Mammary epithelial cell (primary cell): ENCODE measurements at regions of chr3 and their contacts with region 1.

Region 1: DNA sequence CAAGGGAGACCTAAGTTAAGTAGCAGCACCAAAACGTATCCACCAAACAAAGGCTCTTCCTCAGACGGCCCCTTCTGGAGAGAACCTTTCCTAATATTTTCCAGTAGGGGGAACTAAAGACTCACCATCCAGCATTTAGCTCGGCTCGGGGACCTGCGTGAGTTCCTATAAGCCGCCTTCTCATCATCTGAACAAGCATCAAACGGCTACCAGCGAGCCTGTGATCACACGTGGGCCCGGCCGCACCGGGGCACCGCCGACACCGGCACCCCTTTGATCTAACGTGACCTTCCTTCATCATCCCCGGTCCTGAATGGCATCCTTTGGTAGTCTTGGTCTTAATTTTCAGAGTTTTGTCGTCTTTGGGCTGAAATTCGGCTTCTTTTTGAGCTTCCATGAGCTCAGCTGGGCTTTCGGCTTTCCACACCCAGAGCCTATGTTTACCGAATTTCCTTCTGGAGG is 1.4 kb upstream of the ROBO2 start:
- DNase-seq: peak; percentile 67
- H3K4me3 ChIP-seq: no peak overlapping the region
- H3K27ac ChIP-seq: no peak overlapping the region
- H3K4me1 ChIP-seq: peaks cover 7% of the 10 kb centered on the region
- H3K27me3 ChIP-seq: peaks cover 16% of the 10 kb centered on the region
- CTCF ChIP-seq: peak; percentile 45 to 72

Region 2: DNA sequence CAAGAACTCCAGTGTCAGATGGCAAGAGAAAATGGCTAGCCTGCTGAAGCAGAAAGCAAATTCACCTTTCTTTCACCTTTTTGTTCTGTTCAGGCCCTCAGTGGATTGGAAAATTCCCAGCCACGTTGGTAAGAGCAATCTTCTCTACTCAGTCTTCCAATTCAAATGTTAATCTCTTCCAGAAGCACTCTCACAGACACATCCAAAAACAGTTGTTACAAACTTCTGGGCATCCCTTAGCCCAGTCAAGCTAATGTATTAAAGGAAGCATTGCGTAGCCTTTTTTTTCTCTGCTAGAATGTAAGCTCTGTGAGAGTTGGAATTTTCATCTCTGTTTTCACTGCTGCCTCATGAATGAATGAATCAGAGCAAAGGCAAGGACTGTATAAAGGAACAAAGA is 107.8 kb before region 1 on chr3:
- CTCF ChIA-PET with region 1: no interaction called
- dilution Hi-C with region 1: no loop called
- in situ Hi-C with region 1: no loop called
- intact Hi-C with region 1: no loop called
- DNase-seq: no peak
- H3K4me3 ChIP-seq: no peak overlapping the region
- H3K27ac ChIP-seq: no peak overlapping the region
- H3K4me1 ChIP-seq: no peaks in the 10 kb centered on the region
- H3K27me3 ChIP-seq: no peaks in the 10 kb centered on the region
- CTCF ChIP-seq: no peak

Region 3: DNA sequence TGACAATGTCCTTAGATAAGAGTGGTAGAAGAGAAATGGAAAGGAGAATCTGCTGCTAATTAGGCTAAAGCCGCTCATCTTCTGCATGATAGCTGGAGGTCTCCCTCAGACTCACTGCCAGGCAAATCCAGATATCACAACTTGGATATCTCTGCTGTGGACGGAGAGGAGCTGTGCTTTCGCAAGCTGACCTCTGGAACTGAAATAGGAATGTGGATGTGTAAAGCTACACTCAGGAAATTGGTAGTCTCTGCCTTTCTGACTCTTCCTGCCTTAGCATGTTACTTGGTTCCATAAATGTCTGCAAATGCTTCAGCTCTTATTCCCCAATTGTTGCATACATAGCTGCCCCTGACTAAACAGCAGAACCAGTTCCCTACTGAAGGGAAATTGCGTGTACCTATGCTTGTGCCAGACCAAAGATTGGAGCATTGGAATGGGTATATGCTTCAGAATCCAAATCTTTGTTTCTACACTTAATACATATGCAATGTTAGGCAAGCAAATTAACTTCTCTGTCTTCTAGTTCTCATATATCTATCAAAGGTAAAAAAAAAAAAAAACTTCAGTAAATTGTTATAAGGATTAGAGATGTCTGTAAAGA is 73.3 kb before region 1 on chr3:
- CTCF ChIA-PET with region 1: no interaction called
- dilution Hi-C with region 1: no loop called
- in situ Hi-C with region 1: no loop called
- intact Hi-C with region 1: no loop called
- DNase-seq: no peak
- H3K4me3 ChIP-seq: no peak overlapping the region
- H3K27ac ChIP-seq: no peak overlapping the region
- H3K4me1 ChIP-seq: no peaks in the 10 kb centered on the region
- H3K27me3 ChIP-seq: no peaks in the 10 kb centered on the region
- CTCF ChIP-seq: no peak

Region 4: GRCh38 chr3:77071809-77072208 is 33.3 kb after region 1 on chr3:
- CTCF ChIA-PET with region 1: no interaction called
- dilution Hi-C with region 1: no loop called
- in situ Hi-C with region 1: no loop called
- intact Hi-C with region 1: no loop called
- DNase-seq: no peak
- H3K4me3 ChIP-seq: no peak overlapping the region
- H3K27ac ChIP-seq: no peak overlapping the region
- H3K4me1 ChIP-seq: no peaks in the 10 kb centered on the region
- H3K27me3 ChIP-seq: no peaks in the 10 kb centered on the region
- CTCF ChIP-seq: no peak

Region 5: GRCh38 chr3:77254967-77255831 is 216.7 kb after region 1 on chr3:
- CTCF ChIA-PET with region 1: no interaction called
- dilution Hi-C with region 1: no loop called
- in situ Hi-C with region 1: loop called (anchors 10 to 25 kb)
- intact Hi-C with region 1: loop called (anchors 1 kb)
- DNase-seq: peak; percentile 27
- H3K4me3 ChIP-seq: no peak overlapping the region
- H3K27ac ChIP-seq: no peak overlapping the region
- H3K4me1 ChIP-seq: no peaks in the 10 kb centered on the region
- H3K27me3 ChIP-seq: no peaks in the 10 kb centered on the region
- CTCF ChIP-seq: peak; percentile 52 to 69

Region 6: DNA sequence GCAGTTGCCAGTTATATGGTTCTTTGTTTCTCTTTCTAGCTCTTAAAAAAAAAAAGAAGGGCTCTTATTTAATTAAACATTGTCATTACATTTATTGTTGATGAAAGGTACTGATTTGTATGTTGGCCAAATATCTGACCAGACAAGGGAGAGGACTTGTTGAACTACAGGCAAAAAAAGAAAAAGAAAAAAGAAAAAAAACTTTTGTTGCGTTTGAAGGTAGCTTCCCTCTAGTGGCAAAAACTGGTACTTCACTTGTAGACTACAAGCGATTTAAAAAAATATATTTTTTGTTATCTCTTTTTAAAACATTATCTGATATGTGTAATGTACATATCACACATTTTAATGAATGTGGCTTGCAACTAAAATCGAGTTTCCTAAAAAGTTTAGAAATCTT is 282.0 kb after region 1 on chr3:
- CTCF ChIA-PET with region 1: interaction called, 5 read pairs
- dilution Hi-C with region 1: no loop called
- in situ Hi-C with region 1: no loop called
- intact Hi-C with region 1: loop called (anchors 1 kb)
- DNase-seq: no peak
- H3K4me3 ChIP-seq: no peak overlapping the region
- H3K27ac ChIP-seq: no peak overlapping the region
- H3K4me1 ChIP-seq: no peaks in the 10 kb centered on the region
- H3K27me3 ChIP-seq: no peaks in the 10 kb centered on the region
- CTCF ChIP-seq: peak; percentile 56 to 70

Region 7: DNA sequence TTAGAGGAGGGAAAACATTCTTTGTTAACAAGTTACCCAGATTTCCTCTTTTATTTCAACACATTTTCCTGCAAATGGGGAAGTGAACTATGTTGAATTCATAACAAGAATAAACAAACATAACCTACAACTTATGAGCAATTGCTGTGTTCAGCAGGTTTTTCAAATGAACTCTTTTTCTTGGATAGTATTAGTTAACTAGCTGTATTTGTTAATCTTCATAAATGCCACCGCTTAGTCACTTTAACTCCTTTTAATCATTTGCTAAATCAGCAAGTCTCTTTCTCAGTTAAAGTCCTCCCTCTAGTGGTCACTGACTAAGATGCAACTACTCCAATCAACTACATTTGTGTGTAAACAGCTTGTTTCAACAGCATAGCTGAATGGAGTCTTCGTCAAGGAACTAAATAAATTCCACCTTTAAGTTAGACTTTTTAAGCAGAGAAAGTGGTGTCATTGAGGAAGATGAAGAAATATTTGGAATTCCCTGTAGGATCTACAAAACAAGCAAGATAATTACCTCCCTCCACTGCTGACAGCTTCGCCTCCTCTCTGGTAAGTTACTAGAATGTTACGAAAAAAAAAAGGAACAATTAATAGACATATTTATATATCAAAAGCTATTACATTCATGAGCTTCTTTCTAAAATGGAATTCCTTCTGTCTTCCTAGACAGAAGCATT is 1607.3 kb after region 1 on chr3:
- CTCF ChIA-PET with region 1: no interaction called
- dilution Hi-C with region 1: no loop called
- in situ Hi-C with region 1: loop called in 1 of 2 experiments (anchors 25 kb)
- intact Hi-C with region 1: loop called (anchors 1 kb)
- DNase-seq: peak; percentile 61
- H3K4me3 ChIP-seq: no peak overlapping the region
- H3K27ac ChIP-seq: no peak overlapping the region
- H3K4me1 ChIP-seq: peaks cover 14% of the 10 kb centered on the region
- H3K27me3 ChIP-seq: no peaks in the 10 kb centered on the region
- CTCF ChIP-seq: peak; percentile 82 to 91

Region 8: GRCh38 chr3:79032686-79033318 is 1994.3 kb after region 1 on chr3:
- CTCF ChIA-PET with region 1: no interaction called
- dilution Hi-C with region 1: no loop called
- in situ Hi-C with region 1: no loop called
- intact Hi-C with region 1: loop called (anchors 10 kb)
- DNase-seq: peak; percentile 35
- H3K4me3 ChIP-seq: no peak overlapping the region
- H3K27ac ChIP-seq: no peak overlapping the region
- H3K4me1 ChIP-seq: no peaks in the 10 kb centered on the region
- H3K27me3 ChIP-seq: no peaks in the 10 kb centered on the region
- CTCF ChIP-seq: peak; percentile 55 to 63